PC-9 (cell line): ENCODE measurements at regions of chr9 and their contacts with region 1.

Region 1: DNA sequence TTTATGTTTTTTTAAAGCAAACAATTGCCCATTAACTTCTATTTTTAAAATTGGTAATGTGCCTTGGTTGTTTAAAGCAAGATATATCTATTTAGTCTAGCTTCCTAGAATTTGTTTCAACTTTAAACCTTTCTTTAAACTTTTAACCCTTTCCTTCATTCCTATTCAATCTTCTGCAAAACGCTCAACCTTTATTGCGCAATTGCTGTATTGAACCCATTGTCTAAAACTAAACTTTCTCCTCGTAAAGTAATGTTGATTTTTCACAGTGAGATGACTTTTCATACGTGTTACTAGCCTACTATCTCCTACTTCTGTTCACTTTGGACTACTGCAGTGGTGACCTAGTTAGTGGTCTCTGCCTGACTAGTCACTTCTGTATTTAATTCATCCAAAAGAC is 63.3 kb downstream of the SMC5 start:
- DNase-seq: no peak
- H3K4me3 ChIP-seq: no peak overlapping the region
- H3K27ac ChIP-seq: no peak overlapping the region
- H3K4me1 ChIP-seq: no peaks in the 10 kb centered on the region
- H3K27me3 ChIP-seq: no peaks in the 10 kb centered on the region
- CTCF ChIP-seq: no peak

Region 2: DNA sequence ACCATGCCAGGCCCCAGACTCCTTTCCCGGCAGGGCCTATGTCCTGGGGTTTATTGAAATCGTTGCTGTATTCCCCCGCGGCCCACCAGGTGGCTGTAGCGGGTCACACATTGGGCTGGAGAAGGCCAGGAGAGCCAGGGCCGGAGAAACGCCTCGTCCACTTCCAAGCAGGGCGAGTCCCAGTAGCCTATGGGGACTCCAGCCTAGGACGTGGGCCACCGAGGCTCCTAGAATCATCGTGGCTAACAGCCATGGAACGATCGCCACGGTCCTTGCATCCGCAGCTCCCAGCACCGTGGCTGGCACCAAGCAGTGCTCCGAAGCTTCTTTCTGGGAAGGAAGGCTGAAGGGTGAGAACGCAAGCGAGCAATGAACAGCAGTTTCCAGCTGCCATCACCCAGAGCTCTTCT is 909.4 kb before region 1 on chr9:
- CTCF ChIA-PET with region 1: no interaction called
- POLR2A ChIA-PET with region 1: no interaction called
- intact Hi-C with region 1: no loop called
- DNase-seq: peak in 1 of 2 experiments; percentile 66
- H3K4me3 ChIP-seq: no peak overlapping the region
- H3K27ac ChIP-seq: no peak overlapping the region
- H3K4me1 ChIP-seq: no peaks in the 10 kb centered on the region
- H3K27me3 ChIP-seq: no peaks in the 10 kb centered on the region
- CTCF ChIP-seq: peak; percentile 65

Region 3: GRCh38 chr9:70303268-70303667 is 18.8 kb before region 1 on chr9:
- CTCF ChIA-PET with region 1: no interaction called
- POLR2A ChIA-PET with region 1: interaction called, 11 read pairs
- intact Hi-C with region 1: no loop called
- DNase-seq: no peak
- H3K4me3 ChIP-seq: no peak overlapping the region
- H3K27ac ChIP-seq: no peak overlapping the region
- H3K4me1 ChIP-seq: no peaks in the 10 kb centered on the region
- H3K27me3 ChIP-seq: no peaks in the 10 kb centered on the region
- CTCF ChIP-seq: no peak